ENCODE measurements at regions of chr11 and their contacts with region 1.

Region 1: GRCh38 chr11:64960719-64961118 is 11.2 kb downstream of the MAJIN start:
- DNase-seq: no peak
- ATAC-seq: no peak
- H3K4me3 ChIP-seq: no peak overlapping the region
- H3K4me3 Mint-ChIP-seq: no peak overlapping the region
- H3K27ac ChIP-seq: no peak overlapping the region
- H3K27ac Mint-ChIP-seq: no peak overlapping the region
- H3K4me1 ChIP-seq: no peaks in the 10 kb centered on the region
- H3K4me1 Mint-ChIP-seq: no peaks in the 10 kb centered on the region
- H3K27me3 ChIP-seq: peaks cover 0 to 32% of the 10 kb centered on the region in 2 experiments
- H3K27me3 Mint-ChIP-seq: peaks cover 2 to 10% of the 10 kb centered on the region in 2 donors

Region 2: GRCh38 chr11:65013692-65014145 is 53.0 kb after region 1 on chr11:
- CTCF ChIA-PET with region 1: interaction called in 1 of 2 experiments, 13 read pairs
- POLR2A ChIA-PET with region 1: no interaction called
- DNase-seq: peak in 34 of 35 experiments; percentile 66 to 92 (median 84)
- ATAC-seq: peak; percentile 85 to 89 (median 86)
- H3K4me3 ChIP-seq: peak overlapping the region; percentile 75 to 90
- H3K4me3 Mint-ChIP-seq: peak overlapping the region; percentile 86 to 94 (median 88)
- H3K27ac ChIP-seq: peak overlapping the region; percentile 98
- H3K27ac Mint-ChIP-seq: peak overlapping the region; percentile 95 to 96
- H3K4me1 ChIP-seq: peaks cover 2 to 24% of the 10 kb centered on the region in 2 experiments
- H3K4me1 Mint-ChIP-seq: peaks cover 22 to 32% (median 25%) of the 10 kb centered on the region in 3 donors
- H3K27me3 ChIP-seq: no peaks in the 10 kb centered on the region
- H3K27me3 Mint-ChIP-seq: no peaks in the 10 kb centered on the region

Measured in T-cell (primary cell).